ENCODE measurements at regions of chr4 and their contacts with region 1.

Region 1: GRCh38 chr4:150217192-150217591 is 138.9 kb downstream of the DCLK2 start:
- DNase-seq: peak; percentile 70
- H3K4me3 ChIP-seq: no peak overlapping the region
- H3K27ac ChIP-seq: no peak overlapping the region
- H3K4me1 ChIP-seq: peaks cover 17% of the 10 kb centered on the region
- H3K27me3 ChIP-seq: no peaks in the 10 kb centered on the region
- CTCF ChIP-seq: peak; percentile 31 to 77

Region 2: DNA sequence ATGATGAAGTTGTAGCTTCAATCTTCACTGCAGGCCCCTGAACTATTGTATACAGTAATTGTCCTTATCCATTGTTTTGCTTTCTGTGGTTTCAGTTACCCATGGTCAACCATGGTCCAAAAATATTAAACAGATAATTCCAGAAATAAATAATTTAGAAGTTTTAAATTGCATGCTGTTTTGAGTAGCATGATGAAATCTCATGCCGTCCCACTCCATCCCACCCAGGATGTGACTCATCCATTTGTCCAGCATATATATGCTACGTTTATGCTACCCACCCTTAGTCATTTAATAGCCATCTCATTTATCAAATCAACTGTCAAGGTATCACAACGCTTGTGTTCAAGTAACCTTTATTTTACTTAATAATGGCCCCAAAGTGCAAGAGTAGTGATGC is 436.0 kb before region 1 on chr4:
- CTCF ChIA-PET with region 1: no interaction called
- dilution Hi-C with region 1: no loop called
- in situ Hi-C with region 1: no loop called
- intact Hi-C with region 1: no loop called
- DNase-seq: peak; percentile 73
- H3K4me3 ChIP-seq: no peak overlapping the region
- H3K27ac ChIP-seq: peak overlapping the region; percentile 60
- H3K4me1 ChIP-seq: peaks cover 28% of the 10 kb centered on the region
- H3K27me3 ChIP-seq: no peaks in the 10 kb centered on the region
- CTCF ChIP-seq: no peak

Region 3: DNA sequence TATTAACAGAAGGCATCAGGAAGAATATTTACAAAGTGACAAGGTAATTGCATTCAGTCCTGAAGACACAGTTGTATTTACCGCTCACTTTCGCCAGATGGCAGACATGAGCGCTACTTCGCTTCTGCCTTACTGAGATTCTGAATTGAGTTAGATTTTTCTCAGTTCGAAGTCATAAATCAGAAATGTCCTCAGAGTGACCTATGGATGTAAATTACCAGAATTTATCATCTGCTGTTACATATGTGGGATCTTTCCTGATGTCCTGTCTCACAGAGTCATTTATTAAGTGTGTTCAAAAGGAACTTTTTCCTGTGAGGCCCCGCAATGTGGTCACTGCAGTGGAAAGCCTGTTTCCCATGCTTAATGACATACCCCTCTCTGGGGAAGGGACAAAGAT is 236.3 kb before region 1 on chr4:
- CTCF ChIA-PET with region 1: no interaction called
- dilution Hi-C with region 1: no loop called
- in situ Hi-C with region 1: no loop called
- intact Hi-C with region 1: loop called (anchors 1 kb)
- DNase-seq: peak; percentile 34
- H3K4me3 ChIP-seq: no peak overlapping the region
- H3K27ac ChIP-seq: no peak overlapping the region
- H3K4me1 ChIP-seq: no peaks in the 10 kb centered on the region
- H3K27me3 ChIP-seq: no peaks in the 10 kb centered on the region
- CTCF ChIP-seq: peak; percentile 75 to 86

Region 4: DNA sequence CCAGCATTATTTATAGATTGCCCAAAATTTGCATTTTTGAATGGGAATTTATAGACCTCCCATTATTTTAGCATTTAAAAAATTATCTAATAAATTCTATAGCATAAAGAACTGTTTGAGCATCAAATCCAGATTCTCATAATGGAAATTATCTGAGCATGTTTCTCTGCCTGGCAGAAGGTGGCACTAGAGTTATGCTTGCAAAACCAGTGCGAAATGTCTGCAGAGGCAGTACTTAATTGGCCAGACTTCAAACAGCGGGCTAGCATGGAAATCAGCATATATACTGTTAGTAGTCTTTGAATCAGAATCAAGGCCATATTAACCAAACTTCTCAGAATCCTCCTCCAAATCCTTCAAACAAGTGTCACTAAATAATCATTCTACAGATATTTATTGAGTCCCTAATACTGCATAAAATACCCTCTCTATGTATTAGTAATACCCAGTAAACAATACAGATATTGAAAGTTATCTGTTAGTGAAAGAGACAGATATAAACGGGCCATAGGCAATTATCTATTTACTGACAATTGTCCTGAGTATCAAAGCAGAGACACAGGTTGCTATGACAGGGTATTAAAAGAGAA is 217.6 kb before region 1 on chr4:
- CTCF ChIA-PET with region 1: interaction called, 4 read pairs
- dilution Hi-C with region 1: no loop called
- in situ Hi-C with region 1: loop called in 1 of 2 experiments (anchors 10 kb)
- intact Hi-C with region 1: loop called (anchors 2 kb)
- DNase-seq: peak; percentile 36
- H3K4me3 ChIP-seq: no peak overlapping the region
- H3K27ac ChIP-seq: no peak overlapping the region
- H3K4me1 ChIP-seq: peaks cover 13% of the 10 kb centered on the region
- H3K27me3 ChIP-seq: no peaks in the 10 kb centered on the region
- CTCF ChIP-seq: peak; percentile 59 to 74

Region 5: GRCh38 chr4:150010525-150011126 is 206.6 kb before region 1 on chr4:
- CTCF ChIA-PET with region 1: interaction called, 3 read pairs
- dilution Hi-C with region 1: no loop called
- in situ Hi-C with region 1: loop called in 1 of 2 experiments (anchors 10 kb)
- intact Hi-C with region 1: loop called (anchors 1 kb)
- DNase-seq: peak; percentile 52
- H3K4me3 ChIP-seq: no peak overlapping the region
- H3K27ac ChIP-seq: no peak overlapping the region
- H3K4me1 ChIP-seq: no peaks in the 10 kb centered on the region
- H3K27me3 ChIP-seq: no peaks in the 10 kb centered on the region
- CTCF ChIP-seq: peak; percentile 44 to 61

Region 6: GRCh38 chr4:150206954-150207353 is 10.2 kb before region 1 on chr4:
- CTCF ChIA-PET with region 1: no interaction called
- dilution Hi-C with region 1: no loop called
- in situ Hi-C with region 1: no loop called
- intact Hi-C with region 1: no loop called
- DNase-seq: no peak
- H3K4me3 ChIP-seq: no peak overlapping the region
- H3K27ac ChIP-seq: no peak overlapping the region
- H3K4me1 ChIP-seq: peaks cover 2% of the 10 kb centered on the region
- H3K27me3 ChIP-seq: no peaks in the 10 kb centered on the region
- CTCF ChIP-seq: no peak

Region 7: GRCh38 chr4:150302553-150302952 is 85.4 kb after region 1 on chr4:
- CTCF ChIA-PET with region 1: no interaction called
- dilution Hi-C with region 1: no loop called
- in situ Hi-C with region 1: no loop called
- intact Hi-C with region 1: no loop called
- DNase-seq: peak; percentile 87
- H3K4me3 ChIP-seq: no peak overlapping the region
- H3K27ac ChIP-seq: no peak overlapping the region
- H3K4me1 ChIP-seq: peaks cover 28% of the 10 kb centered on the region
- H3K27me3 ChIP-seq: no peaks in the 10 kb centered on the region
- CTCF ChIP-seq: no peak

Measured in mammary epithelial cell (primary cell).